GM10248 (cell line): ENCODE measurements at regions of chr1 and their contacts with region 1.

Region 1: GRCh38 chr1:27102707-27103491 is 52.0 kb downstream of the SLC9A1 start:
- DNase-seq: peak; percentile 87
- CTCF ChIP-seq: peak; percentile 99

Region 2: DNA sequence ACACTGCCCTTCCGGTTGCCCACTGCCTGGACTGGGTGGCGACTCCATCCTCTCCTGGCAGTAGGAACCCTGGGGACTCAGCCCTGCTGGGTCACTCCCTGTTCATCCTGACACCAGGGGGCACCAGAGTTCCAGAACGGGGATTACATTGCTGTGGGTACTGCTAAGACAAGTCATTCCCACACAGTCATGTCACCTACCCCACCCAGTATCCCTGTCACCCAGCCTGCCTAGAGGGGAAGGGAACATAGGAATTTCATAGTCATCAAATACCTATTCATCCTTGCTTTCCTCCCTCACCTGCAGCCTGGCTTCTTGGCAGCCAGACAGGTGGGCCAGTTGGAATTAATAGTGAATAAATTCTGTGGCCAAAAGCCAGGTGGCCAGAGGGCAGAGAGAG is 249.7 kb before region 1 on chr1:
- CTCF ChIA-PET with region 1: no interaction called
- POLR2A ChIA-PET with region 1: no interaction called
- DNase-seq: peak; percentile 82
- CTCF ChIP-seq: peak; percentile 70

Region 3: GRCh38 chr1:26874896-26875295 is 228.0 kb before region 1 on chr1:
- CTCF ChIA-PET with region 1: no interaction called
- POLR2A ChIA-PET with region 1: no interaction called
- DNase-seq: no peak
- CTCF ChIP-seq: no peak

Region 4: GRCh38 chr1:27057801-27058625 is 44.9 kb before region 1 on chr1:
- CTCF ChIA-PET with region 1: interaction called, 15 read pairs
- POLR2A ChIA-PET with region 1: no interaction called
- DNase-seq: no peak
- CTCF ChIP-seq: no peak

Region 5: DNA sequence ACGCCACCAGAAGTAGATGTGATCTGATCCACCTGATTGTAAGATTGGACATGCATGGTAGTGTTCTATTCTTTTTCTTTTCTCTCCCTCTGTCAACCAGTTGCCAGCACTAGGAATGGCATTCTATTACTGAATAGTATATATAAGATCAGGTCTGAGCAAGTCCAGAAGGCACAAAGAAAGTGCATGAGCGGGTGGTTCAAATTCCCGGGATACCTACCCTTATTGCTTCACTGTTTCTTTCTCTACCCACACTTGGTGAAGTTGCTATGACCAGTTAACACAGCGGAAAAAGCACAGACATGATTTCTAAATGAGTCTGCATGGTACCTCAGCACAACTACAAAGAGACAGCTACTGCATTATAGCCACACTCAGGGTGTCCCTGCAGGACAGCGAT is 12.0 kb before region 1 on chr1:
- CTCF ChIA-PET with region 1: interaction called, 19 read pairs
- POLR2A ChIA-PET with region 1: no interaction called
- DNase-seq: no peak
- CTCF ChIP-seq: no peak

Region 6: DNA sequence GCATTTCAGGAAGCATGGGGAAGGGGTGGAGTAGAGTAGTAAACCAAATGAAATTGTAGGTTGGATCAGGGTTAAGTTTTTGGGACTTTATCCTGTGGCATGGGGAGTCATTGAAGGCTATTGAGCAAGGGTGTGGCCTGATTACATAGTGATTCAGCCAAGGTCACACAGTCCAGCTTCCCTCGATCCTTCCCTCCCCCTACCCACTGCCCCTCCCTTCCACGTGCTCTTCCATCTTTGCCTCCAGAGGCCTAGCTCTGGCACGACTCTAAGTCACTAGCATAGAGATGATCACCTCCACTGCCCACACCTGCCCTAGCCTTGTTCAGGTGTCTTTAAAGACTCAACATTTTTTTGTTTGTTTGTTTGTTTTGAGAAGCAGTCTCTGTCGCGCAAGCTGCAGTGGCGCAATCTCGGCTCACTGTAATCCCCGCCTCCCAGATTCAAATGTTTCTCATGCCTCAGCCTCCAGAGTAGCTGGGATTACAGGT is 89.2 kb after region 1 on chr1:
- CTCF ChIA-PET with region 1: interaction called, 11 read pairs
- POLR2A ChIA-PET with region 1: no interaction called
- DNase-seq: no peak
- CTCF ChIP-seq: no peak